ENCODE measurements at regions of chr22 and their contacts with region 1.

Region 1: GRCh38 chr22:24875862-24876506 is 70.0 kb downstream of the SGSM1 start:
- DNase-seq: no peak

Region 2: DNA sequence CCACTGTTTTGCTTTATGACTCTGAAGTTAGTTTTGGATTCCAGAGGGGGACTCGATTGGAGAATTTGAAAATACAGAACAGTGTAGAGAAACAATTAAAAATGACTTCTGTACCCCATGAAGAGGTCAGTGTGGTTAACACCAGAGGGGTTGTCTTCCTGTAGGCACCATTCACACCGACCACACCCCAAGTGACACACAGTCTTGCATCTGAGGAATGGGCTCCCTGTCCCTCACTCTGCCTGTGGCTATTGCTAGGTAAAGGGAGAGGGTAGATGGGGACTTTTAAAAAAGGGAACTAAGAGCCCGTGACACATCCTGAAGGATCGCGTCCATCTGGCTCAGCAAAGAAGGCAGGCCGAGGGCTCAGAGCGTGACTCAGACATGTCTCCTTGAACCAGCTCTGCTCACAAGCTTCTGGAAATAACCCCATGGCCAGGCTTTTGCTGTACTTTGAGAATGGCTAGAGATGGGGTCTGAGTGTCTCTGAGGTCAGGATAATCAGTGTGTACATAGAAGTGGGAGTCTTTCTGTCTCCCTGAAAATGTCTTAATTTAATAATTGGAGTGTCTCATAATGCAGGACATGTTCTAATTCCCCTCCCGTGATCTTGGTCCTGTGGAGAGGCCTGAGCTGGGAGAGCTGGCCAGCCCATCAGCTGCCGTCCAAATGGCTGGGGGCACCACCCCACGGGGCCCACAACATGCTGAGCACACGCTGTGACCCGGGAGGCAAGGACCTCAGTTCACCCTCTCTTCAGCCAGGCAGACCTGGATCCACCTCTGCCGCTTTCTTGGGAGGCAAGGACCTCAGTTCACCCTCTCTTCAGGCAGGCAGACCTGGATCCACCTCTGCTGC is 30.7 kb before region 1 on chr22:
- intact Hi-C with region 1: no loop called
- DNase-seq: peak; percentile 88

Region 3: DNA sequence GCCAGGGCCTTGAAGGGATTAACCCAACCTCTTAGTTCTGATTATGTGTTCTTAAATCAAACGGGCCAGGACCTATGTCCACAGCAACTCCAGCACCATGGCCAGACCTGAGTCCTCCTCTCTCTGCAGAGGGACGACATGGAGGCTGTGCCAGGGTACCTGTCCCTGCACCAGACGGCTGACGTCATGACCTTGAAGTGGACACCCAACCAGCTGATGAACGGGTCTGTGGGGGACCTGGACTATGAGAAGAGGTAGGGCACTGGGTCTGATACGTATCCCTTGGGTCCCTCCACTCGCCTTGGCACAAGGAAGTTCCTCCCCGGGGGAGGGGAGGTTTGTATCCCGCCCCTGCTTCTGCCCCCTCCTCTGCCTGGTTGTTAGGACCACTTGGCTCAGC is 16.4 kb before region 1 on chr22:
- intact Hi-C with region 1: loop called in 1 of 2 experiments (anchors 1 kb)
- DNase-seq: no peak

Measured in posterior vena cava (tissue), 2 donors.